A549 (cell line): ENCODE measurements at regions of chr13 and their contacts with region 1.

Region 1: DNA sequence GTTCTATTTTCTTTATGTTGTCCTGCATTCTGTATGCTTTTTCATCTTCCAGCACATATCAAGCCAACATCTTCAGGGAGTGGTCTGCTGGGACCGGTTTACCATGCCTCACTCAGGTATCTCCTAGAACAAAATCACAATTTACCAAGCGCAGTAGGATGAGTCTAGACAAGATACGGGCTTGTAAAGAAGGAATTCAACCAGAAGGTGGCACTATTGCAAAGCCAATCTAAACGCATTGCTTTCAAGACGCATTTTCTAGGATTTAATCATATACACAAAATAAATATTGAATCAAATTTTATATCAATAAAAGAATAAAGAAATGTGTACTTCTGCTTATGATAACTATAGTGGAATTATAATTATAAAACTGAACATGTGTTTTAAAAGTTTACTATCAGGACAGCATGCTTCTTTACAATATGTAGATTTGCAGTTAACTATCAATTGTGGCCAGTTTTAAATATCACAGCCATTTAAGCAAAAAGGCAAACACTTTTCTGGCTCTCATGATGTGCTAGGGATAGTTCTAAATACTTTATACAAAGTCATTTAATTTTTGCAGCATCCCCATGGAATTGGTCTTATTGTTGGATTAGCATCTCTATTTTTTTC is 16.1 kb upstream of the TPP2 start:
- DNase-seq: peak in 1 of 2 experiments; percentile 65
- ATAC-seq: peak; percentile 66 to 90; a peak in 3 of 6 replicates
- H3K4me3 ChIP-seq: no peak overlapping the region
- H3K27ac ChIP-seq: no peak overlapping the region
- H3K4me1 ChIP-seq: no peaks in the 10 kb centered on the region
- CTCF ChIP-seq: peak; percentile 66
- EP300 ChIP-seq: no peak
- POLR2A ChIP-seq: no peak
- RAD21 ChIP-seq: peak; percentile 71 to 77

Region 2: GRCh38 chr13:102693781-102694180 is 113.1 kb after region 1 on chr13:
- CTCF ChIA-PET with region 1: no interaction called
- POLR2A ChIA-PET with region 1: no interaction called
- DNase-seq: no peak
- ATAC-seq: no peak
- H3K4me3 ChIP-seq: no peak overlapping the region
- H3K27ac ChIP-seq: no peak overlapping the region
- H3K4me1 ChIP-seq: no peaks in the 10 kb centered on the region
- CTCF ChIP-seq: no peak
- EP300 ChIP-seq: no peak
- POLR2A ChIP-seq: no peak
- RAD21 ChIP-seq: no peak

Region 3: GRCh38 chr13:102724923-102725322 is 144.3 kb after region 1 on chr13:
- CTCF ChIA-PET with region 1: interaction called, 38 read pairs
- POLR2A ChIA-PET with region 1: no interaction called
- DNase-seq: peak; percentile 17 to 42
- ATAC-seq: peak; percentile 90 to 91
- H3K4me3 ChIP-seq: no peak overlapping the region
- H3K27ac ChIP-seq: no peak overlapping the region
- H3K4me1 ChIP-seq: peaks cover 6% of the 10 kb centered on the region; the same call in 1 of the 3 replicates
- CTCF ChIP-seq: peak; percentile 59
- EP300 ChIP-seq: no peak
- POLR2A ChIP-seq: no peak
- RAD21 ChIP-seq: peak; percentile 66 to 72